ENCODE measurements at regions of chr17 and their contacts with region 1.

Region 1: GRCh38 chr17:78865682-78866390 is 25.2 kb upstream of the USP36 start:
- DNase-seq: peak; percentile 89 to 91
- H3K4me3 ChIP-seq: peak overlapping the region in 1 of 4 donors; percentile 24
- H3K27ac ChIP-seq: peak overlapping the region in 2 of 5 donors; percentile 17 to 55
- H3K4me1 ChIP-seq: peaks cover 11 to 59% (median 25%) of the 10 kb centered on the region in 4 donors
- H3K27me3 ChIP-seq: no peaks in the 10 kb centered on the region
- CTCF ChIP-seq: peak in 5 of 7 experiments; percentile 79 to 97 (median 90)
- EP300 ChIP-seq: no peak
- POLR2A ChIP-seq: no peak

Region 2: GRCh38 chr17:78798695-78799559 is 66.9 kb before region 1 on chr17:
- intact Hi-C with region 1: no loop called
- DNase-seq: peak in 1 of 2 donors; percentile 60
- H3K4me3 ChIP-seq: no peak overlapping the region
- H3K27ac ChIP-seq: peak overlapping the region in 1 of 5 donors; percentile 27
- H3K4me1 ChIP-seq: peaks cover 5 to 49% (median 29%) of the 10 kb centered on the region in 4 donors
- H3K27me3 ChIP-seq: no peaks in the 10 kb centered on the region
- CTCF ChIP-seq: peak in 5 of 7 experiments; percentile 32 to 47 (median 42)
- EP300 ChIP-seq: no peak
- POLR2A ChIP-seq: no peak

Region 3: GRCh38 chr17:78940708-78941107 is 74.9 kb after region 1 on chr17:
- intact Hi-C with region 1: no loop called
- DNase-seq: no peak
- H3K4me3 ChIP-seq: no peak overlapping the region
- H3K27ac ChIP-seq: no peak overlapping the region
- H3K4me1 ChIP-seq: peaks cover 0 to 5% (median 3%) of the 10 kb centered on the region in 4 donors
- H3K27me3 ChIP-seq: no peaks in the 10 kb centered on the region
- CTCF ChIP-seq: no peak
- EP300 ChIP-seq: no peak
- POLR2A ChIP-seq: no peak

Region 4: DNA sequence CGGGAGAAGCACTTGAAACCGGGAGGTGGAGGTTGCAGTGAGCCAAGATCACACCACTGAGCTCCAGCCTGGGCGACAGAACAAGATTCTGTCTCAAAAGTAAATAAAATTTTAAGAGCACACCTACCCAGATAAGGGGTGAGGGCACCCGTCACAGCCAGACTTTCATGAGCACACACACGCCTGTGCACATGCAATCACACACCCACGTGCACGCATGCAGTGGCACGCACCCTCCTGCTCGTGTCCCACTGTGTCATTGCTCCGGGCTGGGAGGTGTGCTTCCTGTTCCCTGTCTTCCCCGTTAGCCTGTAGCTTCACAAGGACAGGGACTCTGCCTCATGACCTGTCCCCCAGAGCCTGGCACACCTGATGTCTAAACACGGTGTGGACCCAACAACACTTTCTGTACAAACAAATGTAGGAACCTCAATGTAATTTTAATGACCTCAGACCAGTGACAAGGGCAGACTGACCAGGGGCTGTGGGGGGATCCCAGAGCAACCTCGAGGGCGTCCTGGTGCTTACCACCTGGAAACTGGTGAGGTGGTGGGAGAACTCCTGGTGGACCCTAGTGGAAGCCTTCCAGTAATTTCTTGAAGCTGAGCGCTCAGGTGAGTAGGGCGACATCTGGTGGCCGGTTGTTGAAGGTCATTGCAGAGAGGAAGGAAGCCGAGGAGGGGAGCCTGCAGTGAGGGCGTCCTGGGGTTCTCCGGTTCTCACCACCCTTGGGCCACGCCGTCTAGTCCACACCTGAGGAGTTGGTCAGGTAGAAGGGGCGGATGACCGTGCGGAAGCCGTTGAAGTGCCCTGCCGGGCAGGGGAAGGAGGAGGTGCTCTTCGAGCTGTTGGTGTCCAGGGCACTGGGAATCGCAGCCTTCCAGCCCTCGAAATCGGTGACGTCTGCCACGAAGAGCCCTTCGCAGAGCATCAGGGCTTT is 105.3 kb after region 1 on chr17:
- intact Hi-C with region 1: loop called (anchors 5 kb)
- DNase-seq: peak; percentile 86 to 93
- H3K4me3 ChIP-seq: no peak overlapping the region
- H3K27ac ChIP-seq: peak overlapping the region in 3 of 5 donors; percentile 38 to 57 (median 45)
- H3K4me1 ChIP-seq: peaks cover 14 to 45% (median 36%) of the 10 kb centered on the region in 4 donors
- H3K27me3 ChIP-seq: no peaks in the 10 kb centered on the region
- CTCF ChIP-seq: peak in 5 of 7 experiments; percentile 78 to 97 (median 91)
- EP300 ChIP-seq: no peak
- POLR2A ChIP-seq: no peak